CD14-positive monocyte (primary cell): ENCODE measurements at regions of chr10 and their contacts with region 1.

Region 1: GRCh38 chr10:96636551-96636950 is 49.7 kb upstream of the TM9SF3 start:
- DNase-seq: no peak
- H3K4me3 ChIP-seq: no peak overlapping the region
- H3K4me3 Mint-ChIP-seq: no peak overlapping the region
- H3K27ac ChIP-seq: peak overlapping the region in 1 of 2 donors; percentile 34
- H3K27ac Mint-ChIP-seq: peak overlapping the region in 2 of 7 donors; percentile 12 to 58
- H3K4me1 ChIP-seq: no peaks in the 10 kb centered on the region
- H3K4me1 Mint-ChIP-seq: peaks cover 13% of the 10 kb centered on the region
- H3K27me3 ChIP-seq: no peaks in the 10 kb centered on the region
- H3K27me3 Mint-ChIP-seq: no peaks in the 10 kb centered on the region
- CTCF ChIP-seq: no peak

Region 2: DNA sequence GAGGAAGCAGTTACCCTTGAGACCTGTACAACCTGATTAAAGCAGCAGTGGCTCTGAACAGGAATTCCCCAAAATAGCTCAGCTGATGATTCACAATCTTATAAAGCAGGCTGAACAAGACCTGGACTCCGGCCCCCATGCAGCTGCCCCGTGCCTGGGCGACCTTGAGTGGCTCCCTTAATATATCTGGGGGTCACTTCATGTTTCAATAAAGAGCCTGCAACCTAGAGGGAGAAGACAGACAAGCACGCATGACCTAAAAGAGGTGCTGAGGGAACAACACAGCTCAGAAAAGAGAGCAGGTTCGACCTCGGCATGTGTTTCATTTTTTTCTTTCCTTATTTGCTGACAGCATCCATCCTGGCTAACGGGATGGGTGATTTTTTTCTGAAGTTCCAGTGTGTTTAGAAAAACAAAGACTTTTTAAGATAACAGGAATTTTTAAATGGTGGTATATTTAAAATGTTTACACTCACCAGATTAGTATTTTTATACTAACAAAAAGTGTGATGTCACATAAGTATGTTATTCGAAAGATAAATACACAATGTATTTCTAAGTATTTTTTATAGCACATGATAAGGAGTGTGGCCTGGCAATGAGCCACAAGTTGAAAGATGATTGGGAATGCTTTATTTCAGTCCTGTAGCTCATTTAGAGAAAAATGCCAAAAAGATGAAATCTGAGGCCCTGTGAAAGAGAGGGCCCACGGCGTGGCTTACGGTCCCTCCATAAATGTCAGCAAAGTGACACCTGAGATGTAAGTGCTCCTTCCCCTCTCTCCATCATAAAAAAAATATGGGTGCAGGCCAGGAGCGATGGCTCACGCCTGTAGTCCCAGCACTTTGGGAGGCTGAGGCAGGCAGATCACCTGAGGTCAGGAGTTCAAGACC is 387.9 kb after region 1 on chr10:
- intact Hi-C with region 1: loop called in 1 of 2 experiments (anchors 5 kb)
- DNase-seq: peak in 1 of 3 donors; percentile 21
- H3K4me3 ChIP-seq: no peak overlapping the region
- H3K4me3 Mint-ChIP-seq: no peak overlapping the region
- H3K27ac ChIP-seq: no peak overlapping the region
- H3K27ac Mint-ChIP-seq: no peak overlapping the region
- H3K4me1 ChIP-seq: no peaks in the 10 kb centered on the region
- H3K4me1 Mint-ChIP-seq: peaks cover 13% of the 10 kb centered on the region
- H3K27me3 ChIP-seq: no peaks in the 10 kb centered on the region
- H3K27me3 Mint-ChIP-seq: peaks cover 0 to 2% (median 0%) of the 10 kb centered on the region in 3 donors
- CTCF ChIP-seq: no peak